Activated T-helper 1 cell treated with anti-CD3 and anti-CD28 coated beads, Interleukin-12 subunit alpha, Interleukin-12 subunit beta, Interleukin-2, Interleukin-4 antibody, amounts not matched to agents 30 ng/mL and 10 ng/mL and 1 ng/mL, durations not matched to agents 14 hours and 24 hours and 36 hours (primary cell): ENCODE measurements at regions of chr2 and their contacts with region 1.

Region 1: DNA sequence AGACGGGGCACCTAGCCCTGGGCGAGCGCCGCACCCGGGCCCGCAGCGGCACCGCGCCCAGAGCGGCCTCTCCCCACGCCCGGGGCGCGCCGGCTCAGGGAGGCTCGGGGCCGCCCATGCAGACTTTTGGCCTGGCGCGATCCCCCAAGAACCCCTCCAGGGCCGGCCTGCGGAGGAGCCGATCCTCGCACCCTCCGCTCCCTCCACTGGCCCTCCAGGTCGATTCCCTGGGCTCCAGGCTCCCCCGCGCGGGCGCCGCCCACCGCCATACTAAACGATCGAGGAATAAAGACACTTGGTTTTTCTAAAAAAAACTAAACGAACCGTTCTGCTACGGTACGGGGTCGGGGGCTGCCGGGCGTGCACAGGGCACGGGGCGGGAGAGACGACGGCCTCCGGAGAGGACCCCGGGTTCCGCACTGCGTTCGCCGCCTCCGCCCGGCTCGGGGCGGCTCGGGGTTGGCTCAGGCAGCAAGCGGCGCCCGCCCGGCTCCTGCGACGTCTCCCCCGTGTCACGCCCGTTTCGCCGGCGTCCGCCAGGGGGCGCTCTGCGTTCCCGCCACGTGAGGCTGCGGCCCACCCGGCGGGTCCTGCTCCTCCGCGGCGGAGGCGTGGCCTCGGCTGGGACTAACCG is 365 bp upstream of the KHK start:
- DNase-seq: peak; percentile 99
- H3K4me3 Mint-ChIP-seq: peak overlapping the region; percentile 89
- H3K27ac Mint-ChIP-seq: peak overlapping the region; percentile 76
- H3K4me1 Mint-ChIP-seq: peaks cover 27% of the 10 kb centered on the region
- H3K27me3 Mint-ChIP-seq: no peaks in the 10 kb centered on the region

Region 2: DNA sequence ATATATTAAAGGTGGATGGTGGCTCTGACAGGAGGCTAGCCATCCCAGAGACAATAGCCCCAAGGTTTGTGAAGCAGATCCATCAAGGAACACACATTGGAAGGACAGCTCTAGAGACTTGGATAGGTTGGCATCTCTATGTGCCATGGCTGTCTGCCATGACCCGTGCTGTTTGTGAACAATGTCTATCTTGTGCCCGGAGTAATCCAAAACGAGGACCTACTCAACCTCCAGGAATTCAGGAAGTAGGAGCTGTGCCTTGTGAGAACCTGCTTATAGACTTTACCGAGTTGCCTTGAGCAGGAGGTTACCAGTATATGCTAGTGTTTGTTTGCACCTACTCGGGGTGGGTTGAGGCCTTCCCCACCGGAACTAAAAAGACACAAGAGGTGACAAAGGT is 783.4 kb before region 1 on chr2:
- intact Hi-C with region 1: no loop called
- DNase-seq: no peak
- H3K4me3 Mint-ChIP-seq: no peak overlapping the region
- H3K27ac Mint-ChIP-seq: no peak overlapping the region
- H3K4me1 Mint-ChIP-seq: no peaks in the 10 kb centered on the region
- H3K27me3 Mint-ChIP-seq: peaks cover 27% of the 10 kb centered on the region

Region 3: DNA sequence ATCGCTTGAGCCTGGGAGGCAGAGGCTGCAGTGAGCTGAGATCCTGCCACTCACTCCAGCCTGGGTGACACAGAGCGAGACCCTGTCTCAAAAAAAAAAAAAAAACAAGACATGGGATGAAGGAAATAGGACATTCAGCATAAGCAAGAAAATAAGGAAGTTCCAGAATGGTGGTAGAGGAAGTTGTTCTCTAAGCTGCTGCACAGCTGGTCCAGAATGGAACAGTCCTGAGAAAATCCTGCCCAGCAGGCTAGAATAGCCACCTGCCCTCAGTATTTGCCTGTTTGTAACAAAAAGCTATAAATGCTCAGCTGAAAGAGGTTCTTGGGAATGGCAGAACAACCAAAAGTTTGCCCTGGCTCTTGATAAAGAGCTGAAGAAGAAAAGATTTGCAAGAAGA is 126.9 kb before region 1 on chr2:
- intact Hi-C with region 1: loop called (anchors 1 kb)
- DNase-seq: no peak
- H3K4me3 Mint-ChIP-seq: no peak overlapping the region
- H3K27ac Mint-ChIP-seq: no peak overlapping the region
- H3K4me1 Mint-ChIP-seq: no peaks in the 10 kb centered on the region
- H3K27me3 Mint-ChIP-seq: peaks cover 27% of the 10 kb centered on the region

Region 4: DNA sequence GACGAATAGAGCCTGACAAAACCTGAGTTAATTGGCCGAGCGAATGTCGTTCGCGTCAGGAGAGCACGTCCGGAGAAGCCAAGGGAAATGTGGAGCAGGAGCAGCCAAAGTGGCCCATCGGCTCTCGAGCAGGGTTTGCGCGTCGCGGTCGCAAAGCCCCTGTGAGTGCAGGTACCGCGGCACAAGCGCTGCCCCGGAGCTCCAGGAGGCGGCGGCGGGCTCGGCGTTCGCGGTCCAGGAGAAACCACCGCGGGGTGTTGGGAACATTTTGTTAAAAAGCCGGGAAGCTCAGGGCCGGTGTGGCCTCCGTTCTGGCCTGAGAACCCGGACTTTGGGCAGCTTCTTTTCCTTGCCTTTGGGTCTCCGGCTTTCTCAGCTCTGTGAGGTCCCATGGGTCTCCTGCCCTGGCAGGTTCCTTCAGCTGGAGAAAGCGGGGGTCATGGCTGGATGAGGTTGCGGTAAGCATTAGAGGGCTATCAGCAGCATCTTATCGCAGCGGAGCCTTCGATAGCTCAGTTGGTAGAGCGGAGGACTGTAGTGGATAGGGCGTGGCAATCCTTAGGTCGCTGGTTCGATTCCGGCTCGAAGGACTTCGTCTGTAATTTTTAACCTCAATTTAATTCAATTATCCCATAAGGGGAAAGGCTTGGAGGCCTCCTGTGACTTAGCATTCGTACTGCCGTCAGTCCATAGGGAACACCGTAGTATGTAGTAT is 35.8 kb before region 1 on chr2:
- intact Hi-C with region 1: loop called (anchors 1 kb)
- DNase-seq: peak; percentile 88
- H3K4me3 Mint-ChIP-seq: peak overlapping the region; percentile 96
- H3K27ac Mint-ChIP-seq: peak overlapping the region; percentile 99
- H3K4me1 Mint-ChIP-seq: peaks cover 36% of the 10 kb centered on the region
- H3K27me3 Mint-ChIP-seq: peaks cover 7% of the 10 kb centered on the region

Region 5: DNA sequence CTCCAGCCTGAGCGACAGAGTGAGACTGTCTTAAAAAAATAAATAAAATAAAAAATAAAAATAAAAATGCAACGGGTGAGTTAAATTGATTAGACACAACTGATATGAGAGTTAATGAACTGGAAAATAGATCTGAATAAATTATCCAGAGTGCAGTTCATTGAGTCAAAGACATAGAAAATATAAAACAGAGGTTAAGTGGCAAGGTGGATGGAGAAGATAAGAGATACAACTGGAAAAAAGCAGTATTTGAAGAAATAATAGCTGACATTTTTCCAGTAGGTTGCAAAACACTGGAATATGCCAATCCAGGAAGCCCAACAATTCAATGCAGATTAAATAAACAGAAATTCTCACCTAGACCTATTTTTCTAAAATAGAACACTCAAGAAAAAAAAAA is 22.0 kb after region 1 on chr2:
- intact Hi-C with region 1: no loop called
- DNase-seq: no peak
- H3K4me3 Mint-ChIP-seq: no peak overlapping the region
- H3K27ac Mint-ChIP-seq: no peak overlapping the region
- H3K4me1 Mint-ChIP-seq: no peaks in the 10 kb centered on the region
- H3K27me3 Mint-ChIP-seq: peaks cover 9% of the 10 kb centered on the region

Region 6: GRCh38 chr2:27123302-27124231 is 37.4 kb after region 1 on chr2 and contains the start of gene ABHD1:
- intact Hi-C with region 1: loop called (anchors 1 kb)
- DNase-seq: peak; percentile 71
- H3K4me3 Mint-ChIP-seq: peak within 1 kb of the TSS; percentile 88
- H3K27ac Mint-ChIP-seq: peak within 1 kb of the TSS; percentile 55
- H3K4me1 Mint-ChIP-seq: peaks cover 18% of the 10 kb centered on the region
- H3K27me3 Mint-ChIP-seq: peaks cover 31% of the 10 kb centered on the region
- total RNA-seq, gene ABHD1: 0.34 and 0.96 TPM in 2 replicates

Region 7: GRCh38 chr2:27211829-27212627 is 125.8 kb after region 1 on chr2 and contains the starts of genes ATRAID and SLC5A6:
- intact Hi-C with region 1: loop called (anchors 1 kb)
- DNase-seq: peak; percentile 90
- H3K4me3 Mint-ChIP-seq: peak within 1 kb of the TSS; percentile 99
- H3K27ac Mint-ChIP-seq: peak within 1 kb of the TSS; percentile 100
- H3K4me1 Mint-ChIP-seq: peaks cover 53% of the 10 kb centered on the region
- H3K27me3 Mint-ChIP-seq: no peaks in the 10 kb centered on the region
- total RNA-seq, gene ATRAID: 107 and 111 TPM in 2 replicates
- total RNA-seq, gene SLC5A6: 89.2 and 105 TPM in 2 replicates

Region 8: GRCh38 chr2:27489498-27490397 is 403.5 kb after region 1 on chr2 and contains the start of gene IFT172:
- intact Hi-C with region 1: loop called (anchors 10 kb)
- DNase-seq: peak; percentile 98
- H3K4me3 Mint-ChIP-seq: peak within 1 kb of the TSS; percentile 91
- H3K27ac Mint-ChIP-seq: peak within 1 kb of the TSS; percentile 91
- H3K4me1 Mint-ChIP-seq: peaks cover 22% of the 10 kb centered on the region
- H3K27me3 Mint-ChIP-seq: peaks cover 13% of the 10 kb centered on the region
- total RNA-seq, gene IFT172: 13.4 and 13.5 TPM in 2 replicates